Posterior vena cava (tissue), 2 donors: ENCODE measurements at regions of chr1 and their contacts with region 1.

Region 1: GRCh38 chr1:151277249-151277648 is 4.8 kb upstream of the ZNF687 start:
- DNase-seq: no peak

Region 2: GRCh38 chr1:150979092-150980056 is 297.9 kb before region 1 on chr1:
- intact Hi-C with region 1: no loop called
- DNase-seq: peak; percentile 94

Region 3: GRCh38 chr1:151222130-151222529 is 55.1 kb before region 1 on chr1:
- intact Hi-C with region 1: loop called in 1 of 2 experiments (anchors 2 kb)
- DNase-seq: no peak